GM10248 (cell line): ENCODE measurements at regions of chr19 and their contacts with region 1.

Region 1: GRCh38 chr19:44770550-44771257 is 7.0 kb upstream of the CBLC start:
- DNase-seq: peak; percentile 99
- CTCF ChIP-seq: peak; percentile 78

Region 2: DNA sequence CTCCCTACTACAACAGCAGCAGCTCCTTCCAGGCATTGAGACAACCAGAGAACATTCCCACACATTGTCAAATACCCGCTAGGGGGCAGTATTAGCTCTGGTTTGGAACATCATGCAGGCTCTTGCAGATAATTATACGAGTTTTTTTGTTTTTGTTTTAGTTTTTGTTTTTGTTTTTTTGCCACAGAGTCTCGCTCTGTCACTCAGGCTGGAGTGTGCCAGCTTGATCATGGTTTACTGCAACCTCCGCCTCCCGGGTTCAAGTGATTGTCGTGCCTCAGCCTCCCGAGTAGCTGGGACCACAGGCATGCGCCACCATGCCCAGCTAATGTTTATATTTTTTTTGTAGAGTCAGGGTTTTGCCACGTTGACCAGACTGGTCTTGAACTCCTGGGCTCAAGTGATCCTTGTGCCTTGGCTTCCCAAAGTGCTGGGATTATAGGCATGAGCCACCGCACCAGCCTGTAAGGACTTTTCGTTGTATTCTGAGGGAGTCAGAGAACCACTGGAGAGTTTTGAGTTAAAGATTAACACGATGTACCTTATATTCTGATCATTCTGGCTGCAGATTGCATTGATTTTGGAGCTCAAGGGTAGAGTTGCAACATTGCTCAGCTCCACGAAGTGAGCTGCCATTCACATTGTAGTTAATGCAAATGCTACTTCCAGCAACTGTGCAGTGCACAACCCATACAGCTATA is 199.6 kb before region 1 on chr19:
- CTCF ChIA-PET with region 1: interaction called, 14 read pairs
- POLR2A ChIA-PET with region 1: no interaction called
- DNase-seq: peak; percentile 48
- CTCF ChIP-seq: peak; percentile 65

Region 3: DNA sequence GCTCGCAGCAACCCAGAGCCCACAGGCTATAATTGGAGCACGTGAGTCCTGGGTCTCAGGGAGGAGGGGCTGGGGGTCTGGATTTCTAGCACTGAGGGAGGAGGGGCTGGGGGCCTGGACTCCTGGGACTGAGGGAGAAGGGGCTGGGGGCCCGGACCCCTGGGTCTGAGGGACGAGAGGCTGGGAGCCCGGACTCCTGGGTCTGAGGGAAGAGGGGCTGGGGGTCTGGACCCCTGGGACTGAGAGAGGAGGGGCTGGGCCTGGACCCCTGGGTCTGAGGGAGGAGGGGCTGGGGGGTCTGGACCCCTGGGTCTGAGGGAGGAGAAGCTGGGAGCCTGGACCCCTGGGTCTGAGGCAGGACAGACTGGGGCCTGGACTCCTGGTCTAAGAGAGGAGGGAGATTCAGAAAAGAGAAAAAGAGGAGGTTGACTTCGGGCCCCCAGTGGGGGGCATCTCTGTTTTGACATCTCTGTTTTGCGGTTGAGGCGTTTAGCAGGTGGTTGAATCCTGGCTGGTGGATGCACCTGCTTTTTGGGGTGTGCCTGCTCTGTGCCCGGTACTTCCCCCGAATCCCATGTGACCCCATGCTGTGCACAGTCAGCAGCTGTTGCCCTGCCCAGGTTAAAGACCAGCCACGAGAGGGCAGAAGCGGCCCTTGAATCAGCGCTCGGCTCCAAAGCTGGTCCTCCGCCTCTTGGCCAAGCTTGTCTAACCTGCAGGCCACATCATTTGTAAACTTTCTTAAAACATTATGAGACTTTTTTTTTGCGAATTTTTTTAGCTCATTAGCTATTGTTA is 116.5 kb before region 1 on chr19:
- CTCF ChIA-PET with region 1: interaction called, 103 read pairs
- POLR2A ChIA-PET with region 1: no interaction called
- DNase-seq: peak; percentile 87
- CTCF ChIP-seq: peak; percentile 92

Region 4: DNA sequence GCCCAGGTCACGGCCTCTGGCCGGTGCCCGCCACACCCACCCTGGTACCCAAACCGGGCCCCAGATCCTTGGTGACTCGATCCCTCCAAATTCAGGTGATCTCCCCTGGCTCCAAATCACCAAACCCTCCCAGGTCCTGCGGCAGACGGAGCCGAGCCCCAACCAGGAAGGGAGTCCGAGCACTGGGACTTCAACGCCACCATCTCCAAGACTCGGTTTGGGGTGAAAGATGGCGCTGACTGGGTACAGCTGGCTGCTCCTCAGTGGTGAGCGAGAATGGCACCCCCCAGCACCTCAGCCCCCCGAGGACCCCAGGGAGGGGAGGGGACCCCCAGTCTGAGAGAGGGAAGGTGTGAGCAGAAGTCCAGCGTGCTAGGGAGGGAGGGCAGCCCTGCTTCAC is 69.5 kb before region 1 on chr19:
- CTCF ChIA-PET with region 1: no interaction called
- POLR2A ChIA-PET with region 1: no interaction called
- DNase-seq: no peak
- CTCF ChIP-seq: no peak

Region 5: GRCh38 chr19:44741841-44742352 is 28.8 kb before region 1 on chr19:
- CTCF ChIA-PET with region 1: interaction called, 16 read pairs
- POLR2A ChIA-PET with region 1: no interaction called
- DNase-seq: no peak
- CTCF ChIP-seq: no peak

Region 6: GRCh38 chr19:44782729-44783128 is 12.0 kb after region 1 on chr19:
- CTCF ChIA-PET with region 1: interaction called, 54 read pairs
- POLR2A ChIA-PET with region 1: no interaction called
- DNase-seq: no peak
- CTCF ChIP-seq: no peak